CD4-positive, alpha-beta memory T cell (primary cell): ENCODE measurements at regions of chr12 and their contacts with region 1.

Region 1: GRCh38 chr12:11758510-11759493 is 109.3 kb downstream of the ETV6 start:
- DNase-seq: peak in 1 of 5 donors; percentile 25
- H3K4me3 ChIP-seq: no peak overlapping the region
- H3K4me3 Mint-ChIP-seq: peak overlapping the region in 1 of 8 donors; percentile 23
- H3K27ac ChIP-seq: no peak overlapping the region
- H3K27ac Mint-ChIP-seq: peak overlapping the region; percentile 33 to 90 (median 68)
- H3K4me1 ChIP-seq: peaks cover 30% of the 10 kb centered on the region
- H3K4me1 Mint-ChIP-seq: peaks cover 24 to 49% (median 41%) of the 10 kb centered on the region in 4 donors
- H3K27me3 ChIP-seq: no peaks in the 10 kb centered on the region
- H3K27me3 Mint-ChIP-seq: no peaks in the 10 kb centered on the region

Region 2: DNA sequence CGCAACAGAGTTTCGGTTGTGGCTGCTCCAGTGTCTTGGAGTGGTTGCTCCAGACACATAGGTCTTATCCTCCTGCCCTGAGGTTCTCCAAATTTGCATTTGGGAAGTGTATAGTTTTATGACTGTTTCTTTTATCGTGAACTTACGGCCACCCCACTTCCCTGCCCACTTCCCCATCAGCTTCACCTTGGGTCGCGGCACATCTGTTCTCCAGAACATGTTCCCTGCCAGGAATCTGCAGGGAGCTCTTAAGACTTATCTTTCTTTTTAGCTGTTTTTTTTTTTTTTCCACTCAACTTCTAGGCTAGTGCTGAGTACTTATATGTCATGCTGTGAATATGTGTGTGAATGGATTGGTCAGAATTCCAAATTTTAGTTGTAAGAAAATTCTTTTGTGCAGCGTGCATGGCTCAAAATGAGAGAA is 33.9 kb before region 1 on chr12:
- CTCF ChIA-PET with region 1: no interaction called
- POLR2A ChIA-PET with region 1: interaction called, 3 read pairs
- intact Hi-C with region 1: loop called (anchors 5 kb)
- DNase-seq: no peak
- H3K4me3 ChIP-seq: no peak overlapping the region
- H3K4me3 Mint-ChIP-seq: peak overlapping the region in 1 of 8 donors; percentile 17
- H3K27ac ChIP-seq: no peak overlapping the region
- H3K27ac Mint-ChIP-seq: peak overlapping the region in 4 of 7 donors; percentile 6 to 55 (median 40)
- H3K4me1 ChIP-seq: peaks cover 61% of the 10 kb centered on the region
- H3K4me1 Mint-ChIP-seq: peaks cover 43 to 85% (median 69%) of the 10 kb centered on the region in 4 donors
- H3K27me3 ChIP-seq: no peaks in the 10 kb centered on the region
- H3K27me3 Mint-ChIP-seq: no peaks in the 10 kb centered on the region